WTC11 (cell line): ENCODE measurements at regions of chr6 and their contacts with region 1.

Region 1: DNA sequence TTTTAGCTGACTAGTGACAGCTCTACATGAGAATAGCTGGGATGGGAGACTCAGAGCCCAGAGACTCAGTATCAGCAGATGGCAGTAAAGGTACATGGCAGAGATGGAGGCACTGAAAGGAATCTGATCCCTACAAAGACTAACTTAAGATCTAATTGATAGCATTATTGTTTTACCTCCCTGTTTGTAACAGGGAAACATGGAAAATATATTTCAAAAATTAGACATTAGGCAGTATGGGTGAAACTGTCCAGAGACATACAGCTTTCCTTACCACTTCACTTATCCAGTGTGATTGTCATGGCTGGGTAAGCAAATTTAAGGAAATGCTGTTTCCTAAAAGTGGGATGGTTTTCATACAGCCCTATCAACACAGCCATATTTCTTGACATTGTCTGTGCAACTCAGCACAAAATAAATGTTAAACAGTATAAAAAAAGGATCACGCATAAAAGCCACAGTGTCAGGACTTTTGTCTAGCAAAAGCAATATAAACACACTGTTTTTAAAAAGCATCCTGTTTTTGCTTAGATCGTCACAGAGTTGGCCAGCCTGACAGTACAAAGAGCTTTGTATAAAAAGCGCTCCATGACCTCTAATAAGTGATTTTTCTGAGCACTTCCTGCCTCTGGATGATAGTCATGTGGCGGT is 376.9 kb downstream of the PHF3 start:
- DNase-seq: peak; percentile 31
- ATAC-seq: peak; percentile 93
- H3K4me3 Mint-ChIP-seq: no peak overlapping the region
- H3K27ac Mint-ChIP-seq: no peak overlapping the region
- H3K4me1 Mint-ChIP-seq: peaks cover 38% of the 10 kb centered on the region
- H3K27me3 Mint-ChIP-seq: no peaks in the 10 kb centered on the region; the same call in 1 of the 2 replicates
- CTCF ChIP-seq: 0 out of 2 replicates have a peak, but pooled peaks have one; percentile 8

Region 2: GRCh38 chr6:63941747-63942470 is 70.6 kb before region 1 on chr6:
- CTCF ChIA-PET with region 1: no interaction called
- POLR2A ChIA-PET with region 1: no interaction called
- DNase-seq: no peak
- ATAC-seq: no peak
- H3K4me3 Mint-ChIP-seq: no peak overlapping the region
- H3K27ac Mint-ChIP-seq: no peak overlapping the region
- H3K4me1 Mint-ChIP-seq: peaks cover 13% of the 10 kb centered on the region
- H3K27me3 Mint-ChIP-seq: no peaks in the 10 kb centered on the region
- CTCF ChIP-seq: no peak

Region 3: GRCh38 chr6:64330694-64331307 is 318.3 kb after region 1 on chr6:
- CTCF ChIA-PET with region 1: interaction called, 31 read pairs
- POLR2A ChIA-PET with region 1: no interaction called
- DNase-seq: peak; percentile 80
- ATAC-seq: peak; percentile 22; the same call in 1 of the 2 replicates
- H3K4me3 Mint-ChIP-seq: no peak overlapping the region
- H3K27ac Mint-ChIP-seq: no peak overlapping the region
- H3K4me1 Mint-ChIP-seq: peaks cover 6% of the 10 kb centered on the region
- H3K27me3 Mint-ChIP-seq: 0 out of 2 replicates have a peak, but pooled peaks cover 3% of the 10 kb centered on the region
- CTCF ChIP-seq: peak; percentile 43; the same call in 1 of the 2 replicates